ENCODE measurements at regions of chr20 and their contacts with region 1.

Region 1: GRCh38 chr20:50460460-50461267 is 49.5 kb upstream of the PTPN1 start:
- DNase-seq: peak; percentile 69
- ATAC-seq: peak; percentile 92
- H3K4me3 ChIP-seq: no peak overlapping the region
- H3K27ac ChIP-seq: peak overlapping the region; percentile 10; the same call in 1 of the 2 replicates
- H3K4me1 ChIP-seq: peaks cover 4 to 25% of the 10 kb centered on the region in 2 experiments; a peak in 3 of 4 replicates
- H3K27me3 ChIP-seq: no peaks in the 10 kb centered on the region
- CTCF ChIP-seq: peak; percentile 92 to 93 (median 92)
- POLR2A ChIP-seq: no peak
- RAD21 ChIP-seq: peak; percentile 99

Region 2: GRCh38 chr20:49948809-49949548 is 511.7 kb before region 1 on chr20:
- CTCF ChIA-PET with region 1: no interaction called
- POLR2A ChIA-PET with region 1: no interaction called
- RAD21 ChIA-PET with region 1: no interaction called
- intact Hi-C with region 1: no loop called
- DNase-seq: no peak
- ATAC-seq: no peak
- H3K4me3 ChIP-seq: no peak overlapping the region
- H3K27ac ChIP-seq: no peak overlapping the region
- H3K4me1 ChIP-seq: peaks cover 0 to 13% of the 10 kb centered on the region in 2 experiments; a peak in 2 of 4 replicates
- H3K27me3 ChIP-seq: no peaks in the 10 kb centered on the region
- CTCF ChIP-seq: no peak
- POLR2A ChIP-seq: no peak
- RAD21 ChIP-seq: no peak

Region 3: GRCh38 chr20:50278674-50279531 is 181.8 kb before region 1 on chr20:
- CTCF ChIA-PET with region 1: no interaction called
- POLR2A ChIA-PET with region 1: no interaction called
- RAD21 ChIA-PET with region 1: no interaction called
- intact Hi-C with region 1: loop called (anchors 1 kb)
- DNase-seq: peak; percentile 40
- ATAC-seq: peak; percentile 78
- H3K4me3 ChIP-seq: 0 out of 4 replicates have a peak overlapping the region, but pooled peaks of 1 of the 2 experiments have one; percentile 14
- H3K27ac ChIP-seq: peak overlapping the region; percentile 48
- H3K4me1 ChIP-seq: peaks cover 19 to 48% of the 10 kb centered on the region in 2 experiments
- H3K27me3 ChIP-seq: no peaks in the 10 kb centered on the region
- CTCF ChIP-seq: peak in 2 of 3 experiments; percentile 45 to 57; a peak in 4 of 6 replicates
- POLR2A ChIP-seq: no peak
- RAD21 ChIP-seq: no peak

Region 4: DNA sequence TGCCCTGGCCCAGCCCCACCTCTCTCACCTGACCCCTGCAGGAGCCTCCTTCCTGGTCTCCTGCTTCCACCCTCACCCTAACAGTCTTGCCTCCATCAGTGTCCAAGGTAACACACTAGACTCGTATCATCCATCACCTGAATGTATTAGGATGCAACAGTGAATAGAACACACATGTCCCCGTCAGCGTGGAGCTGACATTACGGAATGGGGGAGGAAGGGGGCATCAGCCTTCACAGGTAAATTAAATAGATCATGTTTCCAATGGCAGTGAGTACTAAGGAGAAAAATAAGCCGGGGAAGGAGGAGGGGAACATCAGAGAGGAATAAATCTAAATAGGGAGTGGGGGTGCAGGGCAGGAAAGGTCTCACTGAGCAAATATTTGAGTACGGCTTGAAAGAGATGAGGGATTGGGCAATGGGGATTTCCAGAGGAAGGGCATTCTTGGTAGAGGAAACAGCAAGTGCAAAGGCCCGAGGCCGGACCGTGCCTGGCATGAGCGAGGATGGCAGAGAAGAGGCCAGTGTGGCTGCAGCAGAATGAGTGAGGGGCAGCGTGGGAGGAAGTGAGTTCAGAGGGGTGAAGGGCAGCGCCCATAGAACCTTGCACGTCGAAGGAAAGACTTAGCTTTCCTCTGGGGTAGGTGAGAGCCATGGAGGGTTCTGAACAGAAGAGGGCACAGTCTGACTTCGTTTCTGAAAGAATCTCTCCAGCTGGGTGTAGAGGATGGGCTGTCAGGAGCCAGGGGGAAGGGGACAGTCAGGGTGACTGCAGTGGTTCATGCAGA is 60.6 kb before region 1 on chr20:
- CTCF ChIA-PET with region 1: no interaction called
- POLR2A ChIA-PET with region 1: no interaction called
- RAD21 ChIA-PET with region 1: no interaction called
- intact Hi-C with region 1: loop called (anchors 1 kb)
- DNase-seq: no peak
- ATAC-seq: 0 out of 2 replicates have a peak, but pooled peaks have one; percentile 36
- H3K4me3 ChIP-seq: no peak overlapping the region
- H3K27ac ChIP-seq: no peak overlapping the region
- H3K4me1 ChIP-seq: peaks cover 6 to 7% of the 10 kb centered on the region in 2 experiments; a peak in 3 of 4 replicates
- H3K27me3 ChIP-seq: no peaks in the 10 kb centered on the region; the same call in 1 of the 2 replicates
- CTCF ChIP-seq: peak in 1 of 3 experiments; percentile 29; a peak in 1 of 6 replicates
- POLR2A ChIP-seq: no peak
- RAD21 ChIP-seq: peak; percentile 63

Region 5: GRCh38 chr20:50575847-50576720 is 115.4 kb after region 1 on chr20:
- CTCF ChIA-PET with region 1: interaction called, 8 read pairs
- POLR2A ChIA-PET with region 1: no interaction called
- RAD21 ChIA-PET with region 1: interaction called in 1 of 2 experiments, 3 read pairs
- intact Hi-C with region 1: loop called (anchors 5 kb)
- DNase-seq: peak; percentile 22
- ATAC-seq: peak; percentile 92
- H3K4me3 ChIP-seq: no peak overlapping the region
- H3K27ac ChIP-seq: no peak overlapping the region
- H3K4me1 ChIP-seq: peaks cover 6 to 18% of the 10 kb centered on the region in 2 experiments; a peak in 2 of 4 replicates
- H3K27me3 ChIP-seq: no peaks in the 10 kb centered on the region
- CTCF ChIP-seq: peak; percentile 69 to 82 (median 78)
- POLR2A ChIP-seq: no peak
- RAD21 ChIP-seq: peak; percentile 85